CD4-positive, alpha-beta T cell (primary cell): ENCODE measurements at regions of chr9 and their contacts with region 1.

Region 1: GRCh38 chr9:15510789-15511575 is at the start of gene PSIP1:
- DNase-seq: peak; percentile 72 to 94 (median 84)
- ATAC-seq: peak; percentile 85
- H3K4me3 ChIP-seq: peak within 1 kb of the TSS; percentile 73
- H3K4me3 Mint-ChIP-seq: peak within 1 kb of the TSS; percentile 92
- H3K27ac ChIP-seq: peak within 1 kb of the TSS; percentile 89 to 90
- H3K27ac Mint-ChIP-seq: peak within 1 kb of the TSS; percentile 99
- H3K4me1 ChIP-seq: peaks cover 14% of the 10 kb centered on the region
- H3K4me1 Mint-ChIP-seq: peaks cover 75% of the 10 kb centered on the region
- H3K27me3 ChIP-seq: no peaks in the 10 kb centered on the region
- H3K27me3 Mint-ChIP-seq: no peaks in the 10 kb centered on the region
- CTCF ChIP-seq: no peak
- total RNA-seq, gene PSIP1: 127 to 132 TPM

Region 2: DNA sequence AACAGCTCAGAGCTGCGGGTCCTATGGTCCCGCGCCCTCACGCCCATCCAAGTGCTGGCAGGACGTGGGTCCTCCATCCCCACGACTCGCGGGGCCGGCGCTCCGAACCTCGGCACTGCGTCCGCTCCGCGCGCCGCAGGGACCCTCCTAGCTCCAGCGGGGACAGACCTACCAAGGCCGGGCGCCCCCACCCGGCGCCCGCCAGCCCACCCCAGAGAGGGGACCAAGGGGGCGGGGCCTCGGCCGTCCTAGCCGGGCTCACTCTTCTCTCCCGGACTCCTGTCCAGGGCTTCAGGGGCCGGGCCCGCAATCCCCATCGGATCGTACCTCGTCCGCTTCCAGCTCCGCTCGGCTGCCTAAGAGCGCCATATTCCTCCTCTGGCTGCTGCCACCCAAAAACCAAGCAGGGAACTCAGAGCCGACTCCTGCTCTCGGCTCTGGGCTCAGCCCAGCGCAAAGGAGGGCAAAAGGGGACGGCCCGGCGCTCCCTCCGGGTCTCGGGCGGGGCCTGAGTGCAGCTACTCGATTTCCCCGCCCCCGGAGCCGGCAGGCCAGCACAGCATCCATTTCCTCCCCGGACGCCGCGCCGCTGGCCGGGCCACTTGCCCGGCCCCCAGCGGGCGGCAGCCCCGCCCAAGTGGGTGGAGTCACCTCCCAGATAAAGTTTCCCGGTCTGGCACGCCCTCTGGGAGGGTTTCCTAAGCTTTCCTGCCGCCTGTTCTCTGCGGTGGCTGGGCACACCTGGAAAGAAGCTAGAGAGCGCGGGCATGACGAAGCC is 204.0 kb before region 1 on chr9 and contains the start of gene TTC39B:
- CTCF ChIA-PET with region 1: interaction called, 3 read pairs
- POLR2A ChIA-PET with region 1: interaction called, 21 read pairs
- intact Hi-C with region 1: no loop called
- DNase-seq: peak; percentile 36 to 90 (median 68)
- ATAC-seq: peak; percentile 60
- H3K4me3 ChIP-seq: peak within 1 kb of the TSS; percentile 99
- H3K4me3 Mint-ChIP-seq: peak within 1 kb of the TSS; percentile 99
- H3K27ac ChIP-seq: peak within 1 kb of the TSS; percentile 75 to 82
- H3K27ac Mint-ChIP-seq: peak within 1 kb of the TSS; percentile 87
- H3K4me1 ChIP-seq: peaks cover 34% of the 10 kb centered on the region
- H3K4me1 Mint-ChIP-seq: peaks cover 64% of the 10 kb centered on the region
- H3K27me3 ChIP-seq: no peaks in the 10 kb centered on the region
- H3K27me3 Mint-ChIP-seq: no peaks in the 10 kb centered on the region
- CTCF ChIP-seq: no peak
- total RNA-seq, gene TTC39B: 37.6 to 43.6 TPM

Region 3: DNA sequence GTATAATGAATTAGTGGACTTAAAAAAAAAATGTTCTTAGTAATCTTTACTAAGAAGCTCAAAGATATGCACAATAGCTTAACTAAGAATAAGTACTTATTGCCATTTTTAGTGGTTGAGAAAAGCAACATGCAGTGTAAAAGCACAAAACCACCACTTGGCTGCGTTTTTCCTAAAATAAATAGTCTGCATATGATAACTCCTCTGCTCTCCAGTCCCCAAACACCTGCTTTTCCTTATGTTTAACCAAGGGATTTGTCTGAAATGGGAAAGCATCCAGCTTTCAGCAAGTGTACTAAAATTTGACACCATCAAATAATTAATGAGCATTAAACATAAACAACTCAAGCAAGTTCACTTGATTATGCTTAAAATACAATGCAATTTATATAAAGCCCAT is 41.6 kb before region 1 on chr9:
- CTCF ChIA-PET with region 1: interaction called, 3 read pairs
- POLR2A ChIA-PET with region 1: interaction called, 11 read pairs
- intact Hi-C with region 1: loop called in 1 of 2 experiments (anchors 5 kb)
- DNase-seq: no peak
- ATAC-seq: no peak
- H3K4me3 ChIP-seq: no peak overlapping the region
- H3K4me3 Mint-ChIP-seq: no peak overlapping the region
- H3K27ac ChIP-seq: no peak overlapping the region
- H3K27ac Mint-ChIP-seq: peak overlapping the region; percentile 6
- H3K4me1 ChIP-seq: no peaks in the 10 kb centered on the region
- H3K4me1 Mint-ChIP-seq: peaks cover 7% of the 10 kb centered on the region
- H3K27me3 ChIP-seq: no peaks in the 10 kb centered on the region
- H3K27me3 Mint-ChIP-seq: no peaks in the 10 kb centered on the region
- CTCF ChIP-seq: no peak

Region 4: GRCh38 chr9:15485836-15486666 is 24.9 kb before region 1 on chr9:
- CTCF ChIA-PET with region 1: interaction called, 3 read pairs
- POLR2A ChIA-PET with region 1: interaction called, 16 read pairs
- intact Hi-C with region 1: no loop called
- DNase-seq: peak in 3 of 14 experiments; percentile 33 to 54 (median 50)
- ATAC-seq: peak; percentile 70
- H3K4me3 ChIP-seq: no peak overlapping the region
- H3K4me3 Mint-ChIP-seq: no peak overlapping the region
- H3K27ac ChIP-seq: no peak overlapping the region
- H3K27ac Mint-ChIP-seq: peak overlapping the region; percentile 24
- H3K4me1 ChIP-seq: no peaks in the 10 kb centered on the region
- H3K4me1 Mint-ChIP-seq: peaks cover 49% of the 10 kb centered on the region
- H3K27me3 ChIP-seq: no peaks in the 10 kb centered on the region
- H3K27me3 Mint-ChIP-seq: no peaks in the 10 kb centered on the region
- CTCF ChIP-seq: peak; percentile 61

Region 5: DNA sequence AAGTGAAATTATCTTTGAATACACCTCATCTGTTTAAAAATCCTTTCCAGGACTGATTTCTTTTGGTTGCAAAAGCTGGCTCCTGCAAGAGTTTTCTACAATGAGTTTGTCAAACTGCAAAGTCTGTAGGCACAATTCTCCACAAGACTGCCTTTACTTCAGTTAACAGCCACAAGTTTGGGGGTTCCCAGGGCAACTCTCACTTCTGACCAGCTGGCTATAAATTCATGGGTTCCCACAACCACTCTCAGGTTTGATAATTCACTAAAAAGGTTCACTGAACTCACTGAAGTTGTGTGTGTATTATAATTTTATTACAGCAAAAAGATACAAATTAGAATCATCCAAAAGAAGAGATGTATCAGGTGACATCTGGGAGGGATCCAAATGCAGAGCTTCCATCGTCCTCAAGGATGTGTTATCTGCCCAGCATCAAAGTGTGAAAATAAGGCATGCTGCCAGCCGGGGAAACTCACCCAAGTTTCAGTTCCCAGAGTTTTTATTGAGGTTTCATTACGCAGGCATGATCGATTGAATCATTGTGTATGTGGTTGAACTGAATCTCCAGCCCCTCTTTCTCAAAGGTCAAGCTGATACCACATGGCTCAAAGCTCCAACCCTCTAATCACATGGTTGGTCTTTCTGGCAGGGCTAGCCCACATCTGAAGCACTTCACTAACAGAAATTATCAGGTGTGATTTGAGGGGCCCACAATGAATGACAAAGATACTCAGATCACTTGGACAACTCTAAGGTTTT is 18.8 kb after region 1 on chr9:
- CTCF ChIA-PET with region 1: interaction called, 3 read pairs
- POLR2A ChIA-PET with region 1: interaction called, 16 read pairs
- intact Hi-C with region 1: loop called in 1 of 2 experiments (anchors 1 kb)
- DNase-seq: no peak
- ATAC-seq: no peak
- H3K4me3 ChIP-seq: no peak overlapping the region
- H3K4me3 Mint-ChIP-seq: no peak overlapping the region
- H3K27ac ChIP-seq: no peak overlapping the region
- H3K27ac Mint-ChIP-seq: no peak overlapping the region
- H3K4me1 ChIP-seq: peaks cover 4% of the 10 kb centered on the region
- H3K4me1 Mint-ChIP-seq: peaks cover 18% of the 10 kb centered on the region
- H3K27me3 ChIP-seq: no peaks in the 10 kb centered on the region
- H3K27me3 Mint-ChIP-seq: no peaks in the 10 kb centered on the region
- CTCF ChIP-seq: no peak

Region 6: GRCh38 chr9:15606643-15607472 is 95.9 kb after region 1 on chr9:
- CTCF ChIA-PET with region 1: interaction called, 3 read pairs
- POLR2A ChIA-PET with region 1: interaction called, 11 read pairs
- intact Hi-C with region 1: no loop called
- DNase-seq: peak in 4 of 14 experiments; percentile 13 to 68 (median 62)
- ATAC-seq: no peak
- H3K4me3 ChIP-seq: no peak overlapping the region
- H3K4me3 Mint-ChIP-seq: no peak overlapping the region
- H3K27ac ChIP-seq: no peak overlapping the region
- H3K27ac Mint-ChIP-seq: no peak overlapping the region
- H3K4me1 ChIP-seq: no peaks in the 10 kb centered on the region
- H3K4me1 Mint-ChIP-seq: no peaks in the 10 kb centered on the region
- H3K27me3 ChIP-seq: no peaks in the 10 kb centered on the region
- H3K27me3 Mint-ChIP-seq: no peaks in the 10 kb centered on the region
- CTCF ChIP-seq: peak; percentile 76